ENCODE measurements at regions of chr5 and their contacts with region 1.

Region 1: GRCh38 chr5:88729084-88729828 is 153.7 kb downstream of the MEF2C start:
- DNase-seq: peak in 4 of 5 donors; percentile 55 to 71 (median 62)
- ATAC-seq: peak in 3 of 4 donors; percentile 75 to 85 (median 81)
- H3K4me3 ChIP-seq: no peak overlapping the region
- H3K27ac ChIP-seq: no peak overlapping the region
- H3K4me1 ChIP-seq: peaks cover 0 to 40% (median 20%) of the 10 kb centered on the region in 12 donors
- H3K27me3 ChIP-seq: no peaks in the 10 kb centered on the region
- CTCF ChIP-seq: peak; percentile 76 to 93 (median 82)
- POLR2A ChIP-seq: no peak

Region 2: GRCh38 chr5:88826646-88827585 is 97.7 kb after region 1 on chr5:
- intact Hi-C with region 1: loop called in 4 of 10 experiments (anchors 5 to 10 kb)
- DNase-seq: peak in 4 of 5 donors; percentile 48 to 78 (median 58)
- ATAC-seq: peak; percentile 80 to 94 (median 88)
- H3K4me3 ChIP-seq: peak overlapping the region in 9 of 12 donors; percentile 4 to 34 (median 19)
- H3K27ac ChIP-seq: peak overlapping the region; percentile 62 to 88 (median 82)
- H3K4me1 ChIP-seq: peaks cover 9 to 92% (median 73%) of the 10 kb centered on the region in 12 donors
- H3K27me3 ChIP-seq: no peaks in the 10 kb centered on the region
- CTCF ChIP-seq: no peak
- POLR2A ChIP-seq: peak in 1 of 2 donors; percentile 57

Region 3: GRCh38 chr5:88883059-88883835 is 154.0 kb after region 1 on chr5 and contains the start of gene MEF2C:
- intact Hi-C with region 1: loop called (anchors 2 to 5 kb)
- DNase-seq: peak; percentile 78 to 89 (median 86)
- ATAC-seq: peak; percentile 73 to 93 (median 85)
- H3K4me3 ChIP-seq: peak within 1 kb of the TSS; percentile 47 to 75 (median 71)
- H3K27ac ChIP-seq: peak within 1 kb of the TSS; percentile 77 to 93 (median 92)
- H3K4me1 ChIP-seq: peaks cover 0 to 53% (median 34%) of the 10 kb centered on the region in 12 donors
- H3K27me3 ChIP-seq: no peaks in the 10 kb centered on the region
- CTCF ChIP-seq: no peak
- POLR2A ChIP-seq: peak in 1 of 2 donors; percentile 87
- total RNA-seq, gene MEF2C: 36.8 to 98.5 (median 58.6) TPM

Region 4: DNA sequence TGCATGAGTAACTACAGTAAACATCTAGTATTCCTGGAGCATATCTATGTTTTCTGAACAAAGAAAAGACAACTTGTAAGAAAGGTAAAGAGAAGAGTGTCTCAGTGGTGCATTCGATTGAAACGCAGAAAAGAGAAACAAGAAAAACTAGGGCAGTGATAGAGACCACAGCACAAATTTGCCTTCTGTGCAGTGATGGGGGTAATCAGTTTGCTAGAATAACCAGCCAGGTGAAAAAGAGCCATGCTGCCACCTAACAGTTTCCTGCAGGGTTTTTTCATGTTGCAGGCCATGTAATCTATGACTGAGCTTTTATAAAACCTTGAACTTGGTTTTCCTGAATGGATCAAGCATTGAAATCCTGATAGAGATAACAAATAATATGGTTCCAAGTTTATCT is 352.1 kb after region 1 on chr5:
- intact Hi-C with region 1: loop called in 1 of 10 experiments (anchors 10 kb)
- DNase-seq: no peak
- ATAC-seq: no peak
- H3K4me3 ChIP-seq: no peak overlapping the region
- H3K27ac ChIP-seq: no peak overlapping the region
- H3K4me1 ChIP-seq: no peaks in the 10 kb centered on the region
- H3K27me3 ChIP-seq: no peaks in the 10 kb centered on the region
- CTCF ChIP-seq: no peak
- POLR2A ChIP-seq: no peak

Region 5: GRCh38 chr5:89988998-89989655 is 1259.9 kb after region 1 on chr5:
- intact Hi-C with region 1: loop called in 1 of 10 experiments (anchors 10 kb)
- DNase-seq: peak in 4 of 5 donors; percentile 46 to 73 (median 55)
- ATAC-seq: peak; percentile 74 to 91 (median 89)
- H3K4me3 ChIP-seq: peak overlapping the region in 1 of 12 donors; percentile 1
- H3K27ac ChIP-seq: peak overlapping the region; percentile 41 to 85 (median 68)
- H3K4me1 ChIP-seq: peaks cover 0 to 34% (median 17%) of the 10 kb centered on the region in 12 donors
- H3K27me3 ChIP-seq: no peaks in the 10 kb centered on the region
- CTCF ChIP-seq: no peak
- POLR2A ChIP-seq: no peak

Region 6: DNA sequence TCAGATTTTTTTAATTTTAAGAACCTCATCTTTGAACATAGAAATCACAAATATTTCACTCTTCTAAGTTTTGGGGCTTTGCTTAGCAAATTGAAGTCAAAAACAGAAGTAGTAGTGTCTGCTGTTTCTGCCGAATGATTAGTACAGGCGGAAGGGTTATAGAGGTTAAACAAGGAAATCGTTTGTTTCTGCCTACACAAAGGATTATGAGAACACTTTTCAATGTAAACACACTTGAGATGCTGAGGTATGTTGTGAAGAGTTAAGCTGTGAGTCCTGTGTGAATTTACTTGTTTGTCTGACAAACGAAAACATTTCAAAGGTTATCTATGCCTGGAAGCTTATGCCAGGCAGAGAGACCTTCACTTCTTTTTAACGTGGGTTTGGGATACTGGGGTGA is 1455.5 kb after region 1 on chr5:
- intact Hi-C with region 1: loop called in 7 of 10 experiments (anchors 2 to 10 kb)
- DNase-seq: no peak
- ATAC-seq: no peak
- H3K4me3 ChIP-seq: no peak overlapping the region
- H3K27ac ChIP-seq: no peak overlapping the region
- H3K4me1 ChIP-seq: peaks cover 0 to 4% (median 0%) of the 10 kb centered on the region in 12 donors
- H3K27me3 ChIP-seq: no peaks in the 10 kb centered on the region
- CTCF ChIP-seq: no peak
- POLR2A ChIP-seq: no peak

Region 7: GRCh38 chr5:90386099-90386710 is 1656.9 kb after region 1 on chr5:
- intact Hi-C with region 1: loop called in 1 of 10 experiments (anchors 10 kb)
- DNase-seq: no peak
- ATAC-seq: no peak
- H3K4me3 ChIP-seq: no peak overlapping the region
- H3K27ac ChIP-seq: no peak overlapping the region
- H3K4me1 ChIP-seq: peaks cover 0 to 6% (median 0%) of the 10 kb centered on the region in 12 donors
- H3K27me3 ChIP-seq: no peaks in the 10 kb centered on the region
- CTCF ChIP-seq: peak; percentile 23 to 63 (median 42)
- POLR2A ChIP-seq: no peak

Measured in heart left ventricle (tissue), 16 donors.